ENCODE measurements at regions of chr13 and their contacts with region 1.

Region 1: GRCh38 chr13:48892053-48892690 is 83.5 kb upstream of the FNDC3A start:
- DNase-seq: no peak
- H3K4me3 Mint-ChIP-seq: no peak overlapping the region
- H3K27ac Mint-ChIP-seq: peak overlapping the region; percentile 39
- H3K4me1 Mint-ChIP-seq: peaks cover 32% of the 10 kb centered on the region
- H3K27me3 Mint-ChIP-seq: peaks cover 2% of the 10 kb centered on the region

Region 2: DNA sequence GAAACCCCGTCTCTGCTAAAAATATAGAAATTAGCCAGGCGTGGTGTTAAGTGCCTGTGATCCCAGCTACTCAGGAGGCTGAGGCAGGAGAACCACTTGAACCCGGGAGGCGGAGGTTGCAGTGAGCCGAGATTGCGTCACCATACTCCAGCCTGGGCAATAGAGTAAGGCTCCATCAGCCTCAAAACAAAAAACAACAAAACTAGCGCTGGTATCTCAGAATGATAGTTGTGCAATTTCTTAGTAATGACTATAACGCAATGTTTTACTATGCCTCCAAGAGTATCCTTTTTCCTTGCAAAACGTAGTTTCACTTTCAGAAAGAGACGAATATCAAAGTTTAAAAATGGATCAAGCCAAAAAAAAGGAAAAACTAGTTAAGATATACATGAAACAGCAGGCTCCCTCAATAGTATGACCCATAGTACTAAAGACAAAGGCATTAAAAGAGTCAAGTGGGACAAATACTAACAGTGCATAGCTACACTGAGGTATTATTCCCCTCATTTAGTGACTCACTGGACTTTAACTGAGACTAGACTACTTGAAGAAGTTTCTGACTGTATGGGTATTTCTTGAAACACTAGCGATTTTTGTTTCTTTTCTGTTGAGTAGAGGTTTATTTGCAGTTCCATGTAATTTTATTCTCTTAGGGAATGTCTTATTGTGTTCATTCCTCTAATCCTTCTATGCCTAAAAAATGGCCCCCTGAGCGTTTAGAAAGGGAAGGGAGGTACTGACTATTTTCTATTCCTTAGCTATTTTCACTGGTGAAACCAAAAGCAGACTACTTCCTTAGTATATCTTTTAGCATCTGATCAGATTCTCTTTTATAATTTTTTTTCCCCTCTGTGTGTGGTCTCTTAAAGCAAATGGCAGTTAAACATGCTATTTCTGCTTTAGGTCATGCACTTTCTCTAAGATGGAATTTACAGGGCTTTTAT is 669.5 kb before region 1 on chr13:
- CTCF ChIA-PET with region 1: no interaction called
- intact Hi-C with region 1: loop called (anchors 5 kb)
- DNase-seq: no peak
- H3K4me3 Mint-ChIP-seq: no peak overlapping the region
- H3K27ac Mint-ChIP-seq: peak overlapping the region; percentile 5
- H3K4me1 Mint-ChIP-seq: peaks cover 55% of the 10 kb centered on the region
- H3K27me3 Mint-ChIP-seq: no peaks in the 10 kb centered on the region

Region 3: GRCh38 chr13:48709213-48709612 is 183.0 kb before region 1 on chr13:
- CTCF ChIA-PET with region 1: no interaction called
- intact Hi-C with region 1: loop called (anchors 1 kb)
- DNase-seq: no peak
- H3K4me3 Mint-ChIP-seq: no peak overlapping the region
- H3K27ac Mint-ChIP-seq: no peak overlapping the region
- H3K4me1 Mint-ChIP-seq: peaks cover 11% of the 10 kb centered on the region
- H3K27me3 Mint-ChIP-seq: no peaks in the 10 kb centered on the region

Region 4: GRCh38 chr13:48828962-48829421 is 63.2 kb before region 1 on chr13:
- CTCF ChIA-PET with region 1: no interaction called
- intact Hi-C with region 1: loop called (anchors 1 kb)
- DNase-seq: peak; percentile 45
- H3K4me3 Mint-ChIP-seq: no peak overlapping the region
- H3K27ac Mint-ChIP-seq: no peak overlapping the region
- H3K4me1 Mint-ChIP-seq: peaks cover 48% of the 10 kb centered on the region
- H3K27me3 Mint-ChIP-seq: no peaks in the 10 kb centered on the region

Region 5: GRCh38 chr13:48879432-48879831 is 12.7 kb before region 1 on chr13:
- CTCF ChIA-PET with region 1: interaction called, 4 read pairs
- intact Hi-C with region 1: loop called (anchors 1 kb)
- DNase-seq: no peak
- H3K4me3 Mint-ChIP-seq: no peak overlapping the region
- H3K27ac Mint-ChIP-seq: no peak overlapping the region
- H3K4me1 Mint-ChIP-seq: peaks cover 42% of the 10 kb centered on the region
- H3K27me3 Mint-ChIP-seq: no peaks in the 10 kb centered on the region

Region 6: DNA sequence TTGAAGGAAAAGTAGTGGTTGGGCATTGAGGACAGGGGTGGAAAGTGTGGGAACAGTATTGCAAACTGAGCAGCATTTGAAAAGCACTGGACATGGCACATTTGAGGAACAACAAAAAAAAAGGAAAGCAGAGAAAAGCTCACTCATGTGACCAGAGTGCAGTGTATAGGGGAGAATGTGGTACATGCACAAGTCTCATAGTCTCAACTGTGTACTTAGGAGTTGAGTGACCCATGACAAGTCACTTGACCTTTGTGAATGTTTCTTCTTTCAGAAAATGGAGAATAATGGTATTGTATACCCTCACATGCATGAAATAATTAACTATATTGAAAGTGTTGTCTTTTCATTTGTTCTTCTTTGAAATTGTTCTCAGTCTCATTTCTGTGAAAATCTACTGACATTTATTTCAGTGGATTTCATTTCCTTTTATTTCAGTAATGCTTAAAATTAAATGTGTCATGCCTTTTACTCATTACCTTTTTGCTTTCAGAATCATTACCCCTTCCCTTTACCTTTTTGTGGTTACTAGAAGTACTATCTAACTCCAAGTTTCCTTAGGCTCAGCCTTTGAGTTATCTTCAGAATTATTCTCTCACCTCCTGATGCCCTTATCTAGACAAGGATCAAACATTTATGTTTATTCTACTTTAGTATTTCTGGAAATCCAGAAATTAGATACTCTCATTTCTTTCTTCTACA is 248.9 kb after region 1 on chr13:
- CTCF ChIA-PET with region 1: no interaction called
- intact Hi-C with region 1: loop called (anchors 5 kb)
- DNase-seq: no peak
- H3K4me3 Mint-ChIP-seq: no peak overlapping the region
- H3K27ac Mint-ChIP-seq: peak overlapping the region; percentile 65
- H3K4me1 Mint-ChIP-seq: peaks cover 39% of the 10 kb centered on the region
- H3K27me3 Mint-ChIP-seq: no peaks in the 10 kb centered on the region